ENCODE measurements at regions of chr4 and their contacts with region 1.

Region 1: GRCh38 chr4:4430492-4431197 is 43.7 kb downstream of the NSG1 start:
- DNase-seq: peak; percentile 73
- H3K4me3 Mint-ChIP-seq: no peak overlapping the region
- H3K27ac Mint-ChIP-seq: no peak overlapping the region
- H3K4me1 Mint-ChIP-seq: peaks cover 3% of the 10 kb centered on the region
- H3K27me3 Mint-ChIP-seq: no peaks in the 10 kb centered on the region

Region 2: DNA sequence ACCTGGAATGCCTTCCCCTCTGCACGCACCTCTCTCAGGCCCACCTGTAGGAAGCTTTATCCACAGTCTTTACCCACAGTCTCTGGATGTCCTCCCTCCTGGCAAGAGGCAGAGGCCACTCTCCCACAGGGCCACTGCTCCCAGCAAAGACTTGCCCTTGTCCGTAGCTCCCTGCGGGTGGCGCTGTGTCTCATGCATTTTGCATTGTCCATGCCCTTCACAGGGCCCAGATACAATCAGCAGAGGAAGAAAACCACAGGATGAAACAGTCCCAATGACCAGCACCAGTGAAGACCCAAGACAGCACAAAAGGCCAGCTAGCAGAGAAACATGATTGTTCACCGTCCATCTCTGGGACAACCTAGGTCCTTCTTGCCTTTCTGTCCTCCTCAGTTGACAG is 45.8 kb before region 1 on chr4:
- CTCF ChIA-PET with region 1: interaction called, 17 read pairs
- DNase-seq: peak; percentile 41
- H3K4me3 Mint-ChIP-seq: peak overlapping the region; percentile 40
- H3K27ac Mint-ChIP-seq: no peak overlapping the region
- H3K4me1 Mint-ChIP-seq: peaks cover 17% of the 10 kb centered on the region
- H3K27me3 Mint-ChIP-seq: peaks cover 96% of the 10 kb centered on the region